ENCODE measurements at regions of chr12 and their contacts with region 1.

Region 1: GRCh38 chr12:19428268-19428667 is 11.0 kb upstream of the AEBP2 start:
- DNase-seq: no peak
- H3K4me3 ChIP-seq: no peak overlapping the region
- H3K27ac ChIP-seq: no peak overlapping the region
- H3K4me1 ChIP-seq: peaks cover 0 to 16% (median 12%) of the 10 kb centered on the region in 4 donors
- H3K27me3 ChIP-seq: no peaks in the 10 kb centered on the region
- CTCF ChIP-seq: no peak

Region 2: GRCh38 chr12:19376691-19377090 is 51.6 kb before region 1 on chr12:
- intact Hi-C with region 1: loop called (anchors 2 kb)
- DNase-seq: no peak
- H3K4me3 ChIP-seq: no peak overlapping the region
- H3K27ac ChIP-seq: no peak overlapping the region
- H3K4me1 ChIP-seq: peaks cover 0 to 9% (median 5%) of the 10 kb centered on the region in 4 donors
- H3K27me3 ChIP-seq: no peaks in the 10 kb centered on the region
- CTCF ChIP-seq: no peak

Region 3: GRCh38 chr12:19639781-19640415 is 211.6 kb after region 1 on chr12:
- intact Hi-C with region 1: no loop called
- DNase-seq: no peak
- H3K4me3 ChIP-seq: no peak overlapping the region
- H3K27ac ChIP-seq: no peak overlapping the region
- H3K4me1 ChIP-seq: peaks cover 0 to 11% (median 5%) of the 10 kb centered on the region in 4 donors
- H3K27me3 ChIP-seq: no peaks in the 10 kb centered on the region
- CTCF ChIP-seq: no peak